ENCODE measurements at regions of chr4 and their contacts with region 1.

Region 1: DNA sequence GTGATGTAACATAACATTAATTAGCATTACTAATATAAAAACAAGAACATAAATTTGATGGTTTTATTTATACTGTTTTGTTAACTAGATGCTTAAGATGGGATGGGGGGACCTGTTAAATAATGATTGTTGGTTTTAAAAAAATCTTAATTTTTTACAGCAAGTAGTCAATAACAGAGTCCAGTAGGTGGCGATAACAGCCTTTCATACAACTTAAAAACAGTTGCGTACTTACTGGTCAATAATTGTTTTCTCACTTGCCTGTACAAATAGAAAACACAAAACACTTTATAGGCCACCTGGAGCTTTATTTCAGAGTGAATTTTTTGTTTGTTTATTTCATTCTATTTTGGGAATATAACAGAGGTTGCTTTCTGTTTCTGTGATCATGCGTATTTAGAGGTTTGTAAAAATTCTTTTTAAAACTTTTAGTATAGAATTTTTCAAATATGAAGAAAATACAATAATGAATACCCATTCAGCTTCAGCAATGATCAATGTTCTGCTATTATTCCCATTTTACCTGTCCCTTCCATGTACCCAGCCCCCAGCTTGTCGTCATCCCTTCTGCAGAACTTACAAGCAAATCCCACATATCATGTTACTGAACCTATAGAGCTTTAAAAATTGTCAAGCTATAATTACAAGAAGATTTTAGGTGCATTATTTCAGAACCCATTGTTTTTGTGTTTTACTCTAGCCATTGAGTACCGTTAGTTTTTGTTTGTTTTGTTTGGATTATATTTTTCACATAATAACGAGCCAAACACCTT is 97.1 kb downstream of the MRPL1 start:
- DNase-seq: peak; percentile 12
- ATAC-seq: peak; percentile 52
- H3K4me3 ChIP-seq: no peak overlapping the region
- H3K27ac ChIP-seq: no peak overlapping the region
- H3K4me1 ChIP-seq: no peaks in the 10 kb centered on the region
- H3K27me3 ChIP-seq: no peaks in the 10 kb centered on the region
- CTCF ChIP-seq: peak; percentile 53 to 54 (median 53)
- EP300 ChIP-seq: no peak
- POLR2A ChIP-seq: no peak
- RAD21 ChIP-seq: peak; percentile 74

Region 2: GRCh38 chr4:77721073-77721472 is 238.7 kb before region 1 on chr4:
- CTCF ChIA-PET with region 1: no interaction called
- POLR2A ChIA-PET with region 1: no interaction called
- RAD21 ChIA-PET with region 1: no interaction called
- SMC1A ChIA-PET with region 1: no interaction called
- in situ Hi-C with region 1: no loop called
- intact Hi-C with region 1: no loop called
- DNase-seq: no peak
- ATAC-seq: no peak
- H3K4me3 ChIP-seq: no peak overlapping the region
- H3K27ac ChIP-seq: no peak overlapping the region
- H3K4me1 ChIP-seq: no peaks in the 10 kb centered on the region
- H3K27me3 ChIP-seq: no peaks in the 10 kb centered on the region
- CTCF ChIP-seq: no peak
- EP300 ChIP-seq: no peak
- POLR2A ChIP-seq: no peak
- RAD21 ChIP-seq: no peak

Region 3: DNA sequence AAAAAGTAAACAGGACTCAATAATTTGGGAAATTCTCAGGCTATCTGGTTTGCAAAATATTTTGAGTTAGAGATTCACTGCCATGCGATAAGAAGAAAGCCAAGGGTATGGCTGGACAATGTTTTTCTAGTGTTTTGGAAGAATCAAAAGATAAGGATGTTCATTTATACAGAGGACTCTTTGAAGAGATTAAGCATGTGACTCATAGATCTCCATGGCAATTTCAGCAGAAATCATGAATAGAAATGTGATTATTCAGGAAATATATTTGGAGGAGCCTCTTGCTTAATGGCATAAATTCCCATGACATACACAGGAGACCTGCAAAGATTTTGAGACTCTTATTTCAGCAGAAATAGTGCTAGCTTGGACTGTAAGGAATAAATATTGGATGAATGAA is 80.7 kb after region 1 on chr4:
- CTCF ChIA-PET with region 1: no interaction called
- POLR2A ChIA-PET with region 1: no interaction called
- RAD21 ChIA-PET with region 1: no interaction called
- SMC1A ChIA-PET with region 1: no interaction called
- in situ Hi-C with region 1: no loop called
- intact Hi-C with region 1: no loop called
- DNase-seq: no peak
- ATAC-seq: no peak
- H3K4me3 ChIP-seq: no peak overlapping the region
- H3K27ac ChIP-seq: no peak overlapping the region
- H3K4me1 ChIP-seq: no peaks in the 10 kb centered on the region
- H3K27me3 ChIP-seq: peaks cover 0 to 2% of the 10 kb centered on the region in 2 experiments; a peak in 1 of 4 replicates
- CTCF ChIP-seq: no peak
- EP300 ChIP-seq: no peak
- POLR2A ChIP-seq: no peak
- RAD21 ChIP-seq: no peak

Region 4: DNA sequence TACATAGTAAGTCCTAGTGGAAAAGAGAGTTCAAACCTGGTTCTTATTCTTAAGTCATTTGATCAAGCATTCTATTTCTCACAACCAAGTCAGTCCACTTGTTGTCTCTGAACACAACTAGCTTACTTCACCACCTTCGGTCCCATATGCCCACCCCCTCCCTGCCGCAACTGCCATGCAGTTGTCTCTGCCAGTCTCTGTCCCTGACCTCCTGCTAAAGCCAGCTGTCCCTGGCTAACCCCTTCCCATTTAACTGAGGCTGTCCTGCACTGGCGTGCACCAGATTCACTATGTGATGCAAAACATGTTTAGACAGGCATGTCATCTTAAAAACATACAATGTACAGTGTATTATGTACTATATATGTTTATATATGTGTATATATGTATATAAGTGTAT is 110.1 kb after region 1 on chr4:
- CTCF ChIA-PET with region 1: no interaction called
- POLR2A ChIA-PET with region 1: no interaction called
- RAD21 ChIA-PET with region 1: no interaction called
- SMC1A ChIA-PET with region 1: no interaction called
- in situ Hi-C with region 1: no loop called
- intact Hi-C with region 1: no loop called
- DNase-seq: no peak
- ATAC-seq: no peak
- H3K4me3 ChIP-seq: no peak overlapping the region
- H3K27ac ChIP-seq: no peak overlapping the region
- H3K4me1 ChIP-seq: no peaks in the 10 kb centered on the region
- H3K27me3 ChIP-seq: no peaks in the 10 kb centered on the region; a peak in 2 of 4 replicates
- CTCF ChIP-seq: no peak
- EP300 ChIP-seq: no peak
- POLR2A ChIP-seq: no peak
- RAD21 ChIP-seq: no peak

Region 5: GRCh38 chr4:78517050-78517652 is 557.4 kb after region 1 on chr4:
- CTCF ChIA-PET with region 1: no interaction called
- POLR2A ChIA-PET with region 1: no interaction called
- RAD21 ChIA-PET with region 1: no interaction called
- SMC1A ChIA-PET with region 1: interaction called, 3 read pairs
- in situ Hi-C with region 1: no loop called
- intact Hi-C with region 1: loop called (anchors 10 kb)
- DNase-seq: no peak
- ATAC-seq: no peak
- H3K4me3 ChIP-seq: no peak overlapping the region
- H3K27ac ChIP-seq: no peak overlapping the region
- H3K4me1 ChIP-seq: no peaks in the 10 kb centered on the region
- H3K27me3 ChIP-seq: no peaks in the 10 kb centered on the region
- CTCF ChIP-seq: 0 out of 6 replicates have a peak, but pooled peaks have one; percentile 1 to 12 (median 9)
- EP300 ChIP-seq: no peak
- POLR2A ChIP-seq: no peak
- RAD21 ChIP-seq: peak; percentile 41

Region 6: GRCh38 chr4:78923464-78924312 is 963.9 kb after region 1 on chr4:
- CTCF ChIA-PET with region 1: no interaction called
- POLR2A ChIA-PET with region 1: no interaction called
- RAD21 ChIA-PET with region 1: interaction called, 5 read pairs
- SMC1A ChIA-PET with region 1: interaction called, 3 read pairs
- in situ Hi-C with region 1: no loop called
- intact Hi-C with region 1: loop called (anchors 10 kb)
- DNase-seq: no peak
- ATAC-seq: peak; percentile 59; the same call in 2 of the 3 replicates
- H3K4me3 ChIP-seq: no peak overlapping the region
- H3K27ac ChIP-seq: no peak overlapping the region
- H3K4me1 ChIP-seq: no peaks in the 10 kb centered on the region
- H3K27me3 ChIP-seq: no peaks in the 10 kb centered on the region
- CTCF ChIP-seq: peak; percentile 5 to 21 (median 12); a peak in 1 of 6 replicates
- EP300 ChIP-seq: no peak
- POLR2A ChIP-seq: no peak
- RAD21 ChIP-seq: peak; percentile 37; the same call in 1 of the 2 replicates